B cell (primary cell): ENCODE measurements at regions of chrX and their contacts with region 1.

Region 1: DNA sequence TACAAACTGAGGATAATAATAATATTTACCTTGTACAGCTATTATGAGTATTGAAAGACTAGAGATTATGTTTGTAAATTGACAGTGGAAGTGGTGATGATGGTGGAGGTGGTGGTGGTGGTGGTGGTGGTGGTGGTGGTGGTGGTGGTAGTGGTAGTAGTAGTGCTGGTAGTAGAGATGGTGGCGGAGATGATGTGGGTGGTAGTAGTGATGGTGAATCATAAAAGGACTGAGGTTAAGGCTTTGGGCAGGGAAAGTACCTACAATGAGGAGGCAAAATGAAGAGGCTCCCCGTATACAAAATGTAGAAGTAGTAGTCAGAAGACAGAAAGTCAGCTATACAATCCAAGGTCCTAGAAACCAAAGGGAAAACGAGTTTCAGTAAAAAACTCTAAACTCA is 214.1 kb downstream of the BCOR start:
- DNase-seq: no peak
- ATAC-seq: no peak
- H3K4me3 ChIP-seq: no peak overlapping the region
- H3K4me3 Mint-ChIP-seq: no peak overlapping the region
- H3K27ac ChIP-seq: no peak overlapping the region
- H3K27ac Mint-ChIP-seq: no peak overlapping the region
- H3K4me1 ChIP-seq: no peaks in the 10 kb centered on the region
- H3K4me1 Mint-ChIP-seq: no peaks in the 10 kb centered on the region
- H3K27me3 ChIP-seq: no peaks in the 10 kb centered on the region
- H3K27me3 Mint-ChIP-seq: no peaks in the 10 kb centered on the region
- CTCF ChIP-seq: no peak

Region 2: DNA sequence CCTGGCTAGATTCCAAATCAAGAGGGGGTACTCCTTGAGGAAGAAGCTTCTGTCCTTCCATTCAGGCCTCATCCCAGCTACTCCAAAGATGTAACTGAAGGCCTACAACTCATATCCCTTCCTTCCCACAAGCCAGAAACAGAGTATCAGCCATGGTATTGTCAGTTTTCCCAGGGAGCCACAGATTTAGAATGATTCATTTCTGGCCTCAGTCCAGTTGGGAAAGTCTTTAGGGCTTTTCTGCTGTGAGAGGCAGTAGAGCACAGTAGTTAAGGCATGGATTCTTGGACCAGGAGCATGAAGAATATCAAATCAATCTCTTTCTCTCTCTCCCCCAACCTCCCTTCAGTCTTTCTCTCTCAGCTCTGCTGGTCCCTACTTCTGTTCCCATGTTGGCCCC is 290.9 kb before region 1 on chrX:
- CTCF ChIA-PET with region 1: no interaction called
- POLR2A ChIA-PET with region 1: no interaction called
- intact Hi-C with region 1: no loop called
- DNase-seq: no peak
- ATAC-seq: no peak
- H3K4me3 ChIP-seq: no peak overlapping the region
- H3K4me3 Mint-ChIP-seq: no peak overlapping the region
- H3K27ac ChIP-seq: no peak overlapping the region
- H3K27ac Mint-ChIP-seq: peak overlapping the region; percentile 37
- H3K4me1 ChIP-seq: no peaks in the 10 kb centered on the region
- H3K4me1 Mint-ChIP-seq: no peaks in the 10 kb centered on the region
- H3K27me3 ChIP-seq: no peaks in the 10 kb centered on the region
- H3K27me3 Mint-ChIP-seq: peaks cover 4% of the 10 kb centered on the region
- CTCF ChIP-seq: no peak

Region 3: DNA sequence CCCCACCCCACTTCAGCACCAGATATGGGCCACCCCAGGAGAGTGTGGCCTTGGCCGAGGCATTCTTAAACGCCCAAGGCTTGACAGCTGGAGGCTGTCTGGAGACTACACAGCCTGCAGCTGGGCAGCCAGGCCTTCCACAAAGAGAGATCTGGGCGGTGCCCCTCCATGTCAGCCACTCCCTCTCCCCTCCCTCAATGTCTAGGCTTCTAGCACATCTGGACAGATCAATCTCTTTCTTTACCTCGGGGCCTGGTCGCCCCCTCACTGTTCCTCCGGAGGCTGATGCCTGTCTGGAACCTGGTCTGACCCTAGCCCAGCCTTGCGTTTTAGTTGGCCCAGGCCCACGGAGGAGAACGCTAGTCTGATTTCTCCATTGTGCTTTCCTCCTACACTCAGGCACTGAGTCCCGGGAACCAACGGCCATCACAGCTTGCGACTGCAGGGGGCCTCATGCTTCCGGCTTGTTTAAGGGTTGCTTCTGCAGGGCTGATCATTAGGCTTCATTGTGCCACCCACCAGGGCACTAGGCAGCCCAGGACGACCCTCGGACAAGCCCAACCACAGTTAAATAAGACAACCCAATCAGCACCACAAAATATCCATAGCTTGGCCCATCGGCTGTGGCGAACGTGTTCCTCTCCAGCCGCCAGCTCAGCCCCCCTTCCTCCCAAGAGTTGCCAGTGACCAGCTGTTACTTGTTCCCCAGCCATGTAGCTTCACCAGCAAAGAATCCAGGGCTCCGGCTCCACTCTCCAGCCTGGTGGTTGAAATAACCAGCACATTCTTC is 13.5 kb after region 1 on chrX:
- CTCF ChIA-PET with region 1: no interaction called
- POLR2A ChIA-PET with region 1: interaction called, 15 read pairs
- intact Hi-C with region 1: no loop called
- DNase-seq: no peak
- ATAC-seq: no peak
- H3K4me3 ChIP-seq: no peak overlapping the region
- H3K4me3 Mint-ChIP-seq: no peak overlapping the region
- H3K27ac ChIP-seq: no peak overlapping the region
- H3K27ac Mint-ChIP-seq: no peak overlapping the region
- H3K4me1 ChIP-seq: peaks cover 0 to 4% of the 10 kb centered on the region in 2 donors
- H3K4me1 Mint-ChIP-seq: peaks cover 2% of the 10 kb centered on the region
- H3K27me3 ChIP-seq: peaks cover 0 to 2% (median 0%) of the 10 kb centered on the region in 4 experiments
- H3K27me3 Mint-ChIP-seq: peaks cover 4% of the 10 kb centered on the region
- CTCF ChIP-seq: no peak